ENCODE measurements at regions of chr2 and their contacts with region 1.

Region 1: DNA sequence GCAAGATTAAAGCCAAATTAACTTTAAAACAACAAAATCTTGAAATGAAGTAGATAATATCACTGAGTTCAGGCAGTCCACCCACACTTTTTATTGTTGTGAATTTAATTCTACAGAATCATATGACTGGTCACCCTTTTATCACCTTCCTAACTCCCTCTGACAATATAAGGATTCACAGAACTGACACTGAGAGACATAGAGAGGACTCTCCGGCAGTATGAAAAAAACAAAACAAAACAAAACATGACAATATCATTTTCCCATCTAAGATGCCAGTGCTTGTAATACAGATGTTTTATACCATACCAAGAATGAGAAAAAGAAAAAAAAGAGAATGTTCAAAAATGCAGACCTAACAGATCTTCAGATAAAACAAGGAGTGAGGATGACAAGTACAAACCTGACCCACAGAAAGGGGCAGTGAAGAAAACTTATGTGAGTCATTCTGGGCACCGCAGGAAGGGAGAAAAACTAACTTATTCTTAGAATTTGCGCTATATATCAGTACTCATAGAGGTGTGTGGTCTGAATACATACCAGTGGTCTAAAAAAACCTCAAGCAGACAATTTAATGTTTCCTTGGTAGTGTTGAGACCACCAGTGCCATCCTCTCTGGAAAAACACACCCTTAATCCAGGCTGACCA is 136.6 kb downstream of the ZAP70 start:
- DNase-seq: no peak
- ATAC-seq: no peak
- H3K4me3 ChIP-seq: no peak overlapping the region
- H3K27ac ChIP-seq: no peak overlapping the region
- H3K4me1 ChIP-seq: no peaks in the 10 kb centered on the region
- H3K27me3 ChIP-seq: no peaks in the 10 kb centered on the region
- CTCF ChIP-seq: no peak

Region 2: DNA sequence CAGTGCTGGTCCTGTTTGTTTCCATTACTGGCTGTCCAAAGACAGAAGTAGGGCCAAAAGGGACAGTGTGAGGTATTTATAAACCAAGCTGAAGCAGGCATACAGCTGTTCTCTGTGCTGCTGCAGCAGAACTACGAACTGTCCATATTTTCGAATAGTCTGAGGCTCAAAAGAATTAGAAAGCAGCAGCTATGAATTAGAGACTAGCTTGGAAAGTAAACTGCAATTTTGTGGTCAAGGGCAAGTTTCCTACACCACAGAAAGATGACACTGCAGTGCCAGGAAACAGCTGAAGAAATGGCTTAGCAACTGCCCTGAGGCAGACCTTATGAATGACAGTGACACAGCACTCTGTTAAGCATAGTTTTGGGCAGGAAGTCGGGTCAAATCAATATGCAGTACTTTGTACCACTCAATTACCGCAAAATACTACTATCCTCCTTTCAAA is 20.4 kb after region 1 on chr2:
- CTCF ChIA-PET with region 1: no interaction called
- POLR2A ChIA-PET with region 1: no interaction called
- intact Hi-C with region 1: loop called (anchors 1 kb)
- DNase-seq: peak; percentile 95
- ATAC-seq: peak; percentile 57
- H3K4me3 ChIP-seq: peak overlapping the region; percentile 50
- H3K27ac ChIP-seq: peak overlapping the region; percentile 100
- H3K4me1 ChIP-seq: peaks cover 57% of the 10 kb centered on the region
- H3K27me3 ChIP-seq: no peaks in the 10 kb centered on the region
- CTCF ChIP-seq: no peak

Region 3: GRCh38 chr2:98123286-98123685 is 273.3 kb after region 1 on chr2:
- CTCF ChIA-PET with region 1: no interaction called
- POLR2A ChIA-PET with region 1: no interaction called
- intact Hi-C with region 1: no loop called
- DNase-seq: no peak
- ATAC-seq: no peak
- H3K4me3 ChIP-seq: no peak overlapping the region
- H3K27ac ChIP-seq: no peak overlapping the region
- H3K4me1 ChIP-seq: no peaks in the 10 kb centered on the region
- H3K27me3 ChIP-seq: peaks cover 10% of the 10 kb centered on the region; the same call in 1 of the 2 replicates
- CTCF ChIP-seq: no peak